ENCODE measurements at regions of chr2 and their contacts with region 1.

Region 1: GRCh38 chr2:224099861-224100643 is 61.0 kb upstream of the SERPINE2 start:
- DNase-seq: no peak
- H3K4me3 Mint-ChIP-seq: no peak overlapping the region
- H3K27ac Mint-ChIP-seq: no peak overlapping the region
- H3K4me1 Mint-ChIP-seq: peaks cover 2% of the 10 kb centered on the region
- H3K27me3 Mint-ChIP-seq: peaks cover 2% of the 10 kb centered on the region

Region 2: GRCh38 chr2:224085246-224085645 is 14.8 kb before region 1 on chr2:
- CTCF ChIA-PET with region 1: no interaction called
- intact Hi-C with region 1: loop called (anchors 1 kb)
- DNase-seq: no peak
- H3K4me3 Mint-ChIP-seq: no peak overlapping the region
- H3K27ac Mint-ChIP-seq: no peak overlapping the region
- H3K4me1 Mint-ChIP-seq: peaks cover 9% of the 10 kb centered on the region
- H3K27me3 Mint-ChIP-seq: no peaks in the 10 kb centered on the region